Thyroid gland (tissue), 4 donors: ENCODE measurements at regions of chr11 and their contacts with region 1.

Region 1: GRCh38 chr11:62905927-62906531 is 15.1 kb downstream of the CHRM1 start:
- DNase-seq: peak; percentile 74 to 86
- H3K4me3 ChIP-seq: no peak overlapping the region
- H3K27ac ChIP-seq: no peak overlapping the region
- H3K4me1 ChIP-seq: peaks cover 20 to 28% of the 10 kb centered on the region in 2 donors
- H3K27me3 ChIP-seq: no peaks in the 10 kb centered on the region
- CTCF ChIP-seq: peak; percentile 97 to 99 (median 98)
- POLR2A ChIP-seq: no peak

Region 2: GRCh38 chr11:63023841-63024648 is 118.0 kb after region 1 on chr11:
- intact Hi-C with region 1: loop called (anchors 2 kb)
- DNase-seq: peak; percentile 88 to 92
- H3K4me3 ChIP-seq: no peak overlapping the region
- H3K27ac ChIP-seq: no peak overlapping the region
- H3K4me1 ChIP-seq: peaks cover 0 to 5% of the 10 kb centered on the region in 2 donors
- H3K27me3 ChIP-seq: no peaks in the 10 kb centered on the region
- CTCF ChIP-seq: peak; percentile 98 to 100 (median 99)
- POLR2A ChIP-seq: no peak

Region 3: DNA sequence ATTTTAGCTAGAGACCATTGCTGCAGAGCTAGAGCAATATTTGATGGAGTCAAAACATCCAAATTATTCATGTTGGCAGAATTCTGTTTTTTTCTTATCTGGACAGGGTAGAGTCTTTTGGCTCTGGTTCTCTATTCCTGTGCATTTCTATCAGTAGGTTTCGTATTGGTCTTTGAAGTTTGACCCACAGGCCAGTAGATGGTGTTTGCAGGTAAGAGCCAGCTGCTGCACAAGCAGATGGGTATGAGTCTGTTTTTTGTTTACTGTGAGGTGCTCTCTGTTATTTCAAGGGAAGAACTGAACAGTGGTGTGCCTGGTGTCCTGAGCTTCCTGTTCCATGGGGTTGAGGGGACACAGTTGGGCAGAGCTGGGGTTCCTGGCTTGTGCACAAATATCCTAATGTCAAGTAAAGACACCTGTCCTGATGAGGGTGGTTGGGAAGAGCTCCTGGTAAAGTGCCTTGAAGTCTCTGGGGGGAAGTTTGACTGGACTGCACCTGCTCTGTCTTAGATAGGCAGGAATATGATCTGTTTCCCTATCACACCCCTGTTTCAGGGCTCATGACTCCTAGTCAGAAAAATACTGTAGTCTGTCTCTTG is 371.4 kb after region 1 on chr11:
- intact Hi-C with region 1: no loop called
- DNase-seq: no peak
- H3K4me3 ChIP-seq: no peak overlapping the region
- H3K27ac ChIP-seq: no peak overlapping the region
- H3K4me1 ChIP-seq: no peaks in the 10 kb centered on the region
- H3K27me3 ChIP-seq: no peaks in the 10 kb centered on the region
- CTCF ChIP-seq: peak in 1 of 6 experiments; percentile 37
- POLR2A ChIP-seq: no peak